Head of caudate nucleus (tissue), 42 donors: ENCODE measurements at regions of chr5 and their contacts with region 1.

Region 1: GRCh38 chr5:31854181-31855133 is 215.5 kb downstream of the PDZD2 start:
- DNase-seq: peak in 37 of 42 donors; percentile 9 to 71 (median 41)

Region 2: GRCh38 chr5:31911291-31912265 is 57.1 kb after region 1 on chr5:
- intact Hi-C with region 1: loop called (anchors 2 kb)
- DNase-seq: peak; percentile 44 to 94 (median 82)